Activated CD4-positive, alpha-beta T cell treated with anti-CD3 and anti-CD28 coated beads, Interleukin-2, amount 10 ng/mL, durations not matched to agents 24 days and 14 days (primary cell): ENCODE measurements at regions of chr10 and their contacts with region 1.

Region 1: DNA sequence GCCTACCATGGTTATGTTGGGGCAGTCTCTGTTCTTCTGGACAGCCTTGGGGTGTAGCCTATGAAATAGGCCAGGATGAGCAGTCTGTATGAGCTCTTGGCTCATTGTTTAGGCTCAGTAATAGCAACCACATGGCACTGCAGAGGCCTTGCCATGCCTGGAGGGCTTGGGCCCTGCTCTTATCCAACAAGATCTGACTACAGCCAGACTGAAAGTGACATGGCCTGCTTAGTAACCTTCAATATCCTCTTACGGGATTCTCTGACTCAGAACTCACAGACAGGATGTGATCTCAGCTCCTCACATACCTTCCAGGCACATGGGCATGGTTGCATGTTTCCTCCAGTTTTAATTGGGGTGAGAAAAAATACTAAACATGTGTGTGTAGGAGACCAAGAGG is 289.3 kb downstream of the PTEN start:
- DNase-seq: peak; percentile 83
- H3K4me3 Mint-ChIP-seq: peak overlapping the region; percentile 57
- H3K27ac Mint-ChIP-seq: peak overlapping the region; percentile 91
- H3K4me1 Mint-ChIP-seq: peaks cover 20% of the 10 kb centered on the region
- H3K27me3 Mint-ChIP-seq: no peaks in the 10 kb centered on the region

Region 2: DNA sequence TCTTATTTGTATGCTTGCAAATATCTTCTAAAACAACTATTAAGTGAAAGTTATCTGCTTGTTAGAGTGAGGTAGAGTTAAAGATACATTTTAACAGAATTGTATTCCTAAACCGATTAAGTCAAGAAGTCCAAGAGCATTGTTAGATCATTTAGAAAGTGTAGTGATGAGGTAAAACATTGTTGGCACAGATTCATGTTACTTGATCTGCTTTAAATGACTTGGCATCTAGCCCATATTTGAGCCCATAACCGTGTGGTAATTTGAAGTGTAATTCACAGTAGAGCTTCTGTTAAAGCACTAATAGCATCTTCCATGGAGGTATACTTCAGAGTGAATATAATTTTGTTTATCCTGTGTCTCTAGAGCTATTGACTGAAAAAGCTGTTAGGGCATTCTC is 227.2 kb before region 1 on chr10:
- intact Hi-C with region 1: no loop called
- DNase-seq: no peak
- H3K4me3 Mint-ChIP-seq: no peak overlapping the region
- H3K27ac Mint-ChIP-seq: no peak overlapping the region
- H3K4me1 Mint-ChIP-seq: peaks cover 39% of the 10 kb centered on the region
- H3K27me3 Mint-ChIP-seq: no peaks in the 10 kb centered on the region

Region 3: DNA sequence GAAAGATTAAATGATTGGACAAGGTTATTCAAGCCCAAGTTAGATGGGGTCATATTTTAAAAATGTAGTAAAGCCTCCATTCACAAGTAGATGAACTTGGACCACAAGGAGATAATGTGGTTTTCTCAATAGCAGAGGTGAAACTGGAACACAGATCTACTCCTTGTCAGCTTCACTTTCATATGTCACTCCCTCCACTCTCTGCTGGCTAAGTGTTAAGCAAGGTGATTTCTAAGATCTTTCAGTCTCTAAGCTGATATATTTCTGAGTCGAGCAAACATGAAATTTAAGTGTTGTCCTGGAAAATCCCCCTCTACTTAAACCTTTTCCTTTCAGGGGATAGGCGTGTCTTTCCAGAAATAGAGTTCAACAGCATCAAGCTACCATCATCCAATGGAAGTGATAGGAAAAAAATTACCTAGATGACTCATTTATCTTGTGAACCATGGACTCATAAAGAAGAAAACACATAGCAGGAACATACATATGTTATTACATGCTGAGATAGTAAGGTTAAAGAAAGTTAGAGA is 14.3 kb before region 1 on chr10:
- intact Hi-C with region 1: loop called (anchors 2 kb)
- DNase-seq: peak; percentile 69
- H3K4me3 Mint-ChIP-seq: peak overlapping the region; percentile 36
- H3K27ac Mint-ChIP-seq: peak overlapping the region; percentile 38
- H3K4me1 Mint-ChIP-seq: peaks cover 13% of the 10 kb centered on the region
- H3K27me3 Mint-ChIP-seq: peaks cover 12% of the 10 kb centered on the region

Region 4: GRCh38 chr10:88165849-88166271 is 13.1 kb after region 1 on chr10:
- intact Hi-C with region 1: no loop called
- DNase-seq: no peak
- H3K4me3 Mint-ChIP-seq: no peak overlapping the region
- H3K27ac Mint-ChIP-seq: no peak overlapping the region
- H3K4me1 Mint-ChIP-seq: peaks cover 31% of the 10 kb centered on the region
- H3K27me3 Mint-ChIP-seq: no peaks in the 10 kb centered on the region

Region 5: DNA sequence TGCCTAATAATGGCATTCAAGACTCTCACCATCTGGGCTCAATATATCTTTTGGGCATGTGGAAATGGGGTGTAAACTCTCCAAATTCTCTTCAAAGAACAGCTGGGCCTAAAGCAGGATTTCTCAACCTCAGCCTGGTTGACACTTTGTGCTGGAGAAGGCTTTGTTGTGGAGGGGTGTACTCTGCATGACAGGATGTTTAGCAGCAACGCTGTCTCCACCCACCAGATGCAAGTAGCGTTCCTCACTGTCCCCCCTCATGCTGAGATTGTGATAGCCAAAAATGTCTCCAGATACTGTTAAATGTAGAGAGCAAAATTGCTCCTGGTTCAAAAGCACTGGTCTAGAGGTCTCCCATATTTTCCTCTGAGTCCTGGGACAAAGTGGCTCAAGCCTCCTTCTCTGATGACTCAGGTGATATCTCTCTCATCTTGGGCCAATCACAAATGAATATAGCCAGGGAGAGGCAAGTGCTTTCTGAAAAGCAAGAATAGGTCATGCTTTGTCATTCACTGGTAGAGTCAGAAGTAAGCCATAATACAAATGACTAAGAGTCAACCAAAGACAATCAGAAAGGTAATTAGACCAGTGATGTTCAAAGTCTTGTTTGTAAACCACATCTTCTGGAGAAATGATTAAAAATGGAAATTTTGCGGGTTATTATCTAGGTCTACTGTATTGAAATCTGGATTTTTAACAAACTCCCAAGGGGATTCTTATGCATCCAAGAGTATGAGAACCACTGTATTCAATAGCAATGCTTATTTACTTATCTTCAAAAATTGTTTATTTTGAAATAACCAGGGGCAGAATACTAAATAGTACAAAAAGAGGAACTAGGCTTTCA is 41.5 kb after region 1 on chr10:
- intact Hi-C with region 1: loop called (anchors 5 kb)
- DNase-seq: peak; percentile 85
- H3K4me3 Mint-ChIP-seq: peak overlapping the region; percentile 39
- H3K27ac Mint-ChIP-seq: peak overlapping the region; percentile 79
- H3K4me1 Mint-ChIP-seq: peaks cover 25% of the 10 kb centered on the region
- H3K27me3 Mint-ChIP-seq: peaks cover 2% of the 10 kb centered on the region